GM12878 (cell line): ENCODE measurements at regions of chr20 and their contacts with region 1.

Region 1: DNA sequence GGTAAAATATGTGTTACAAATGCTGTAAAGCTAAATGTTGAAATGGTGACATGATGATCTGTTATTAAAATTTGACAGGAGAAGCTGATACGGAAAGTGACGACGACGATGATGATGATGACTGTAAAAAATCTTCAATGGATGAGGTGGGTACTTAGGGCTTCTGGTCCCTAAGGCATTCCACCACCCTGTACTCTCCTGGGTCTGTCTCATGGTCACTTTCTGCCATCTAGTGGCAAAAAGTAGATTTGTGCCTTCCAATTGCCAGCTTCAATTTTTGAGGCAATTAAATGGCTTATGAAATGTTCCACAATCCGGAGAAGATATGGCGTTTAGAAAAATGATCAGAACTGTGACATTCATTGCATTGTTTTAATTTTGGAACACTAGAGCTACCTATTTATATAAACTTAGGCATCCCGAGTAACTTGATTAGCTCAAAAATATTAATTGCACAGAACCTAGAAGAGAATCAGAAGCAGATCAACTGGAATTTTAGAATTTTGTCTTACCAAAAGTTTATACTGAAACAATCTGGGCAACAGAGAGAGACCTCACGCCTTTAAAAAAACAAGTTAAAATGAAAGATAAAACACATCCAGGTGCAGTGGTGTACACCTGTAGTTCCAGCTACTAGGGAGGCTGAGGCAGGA is 346.5 kb upstream of the PLCB4 start:
- DNase-seq: peak; percentile 30
- ATAC-seq: peak; percentile 93
- H3K4me3 ChIP-seq: no peak overlapping the region
- H3K27ac ChIP-seq: no peak overlapping the region
- H3K4me1 ChIP-seq: no peaks in the 10 kb centered on the region
- H3K27me3 ChIP-seq: peaks cover 1 to 2% of the 10 kb centered on the region in 2 experiments; a peak in 2 of 4 replicates
- CTCF ChIP-seq: peak; percentile 68 to 80 (median 68); a peak in 5 of 6 replicates
- EP300 ChIP-seq: no peak
- POLR2A ChIP-seq: no peak
- RAD21 ChIP-seq: peak; percentile 92

Region 2: GRCh38 chr20:7980332-7981046 is 741.9 kb before region 1 on chr20:
- CTCF ChIA-PET with region 1: interaction called, 12 read pairs
- POLR2A ChIA-PET with region 1: no interaction called
- RAD21 ChIA-PET with region 1: interaction called, 3 read pairs
- SMC1A ChIA-PET with region 1: interaction called, 6 read pairs
- in situ Hi-C with region 1: no loop called
- intact Hi-C with region 1: loop called (anchors 1 kb)
- DNase-seq: no peak
- ATAC-seq: peak; percentile 84
- H3K4me3 ChIP-seq: no peak overlapping the region
- H3K27ac ChIP-seq: no peak overlapping the region
- H3K4me1 ChIP-seq: no peaks in the 10 kb centered on the region
- H3K27me3 ChIP-seq: no peaks in the 10 kb centered on the region
- CTCF ChIP-seq: peak; percentile 46 to 49 (median 47); a peak in 4 of 6 replicates
- EP300 ChIP-seq: no peak
- POLR2A ChIP-seq: no peak
- RAD21 ChIP-seq: peak; percentile 41; the same call in 1 of the 2 replicates

Region 3: GRCh38 chr20:8131598-8132483 is 590.6 kb before region 1 on chr20 and contains the start of gene PLCB1:
- CTCF ChIA-PET with region 1: interaction called, 39 read pairs
- POLR2A ChIA-PET with region 1: no interaction called
- RAD21 ChIA-PET with region 1: interaction called, 9 read pairs
- SMC1A ChIA-PET with region 1: interaction called, 19 read pairs
- in situ Hi-C with region 1: loop called (anchors 5 kb)
- intact Hi-C with region 1: loop called (anchors 2 kb)
- DNase-seq: no peak
- ATAC-seq: peak; percentile 95
- H3K4me3 ChIP-seq: peak within 1 kb of the TSS; percentile 41; the same call in 1 of the 2 replicates
- H3K27ac ChIP-seq: no peak within 1 kb of the TSS
- H3K4me1 ChIP-seq: peaks cover 10% of the 10 kb centered on the region; the same call in 1 of the 2 replicates
- H3K27me3 ChIP-seq: peaks cover 5 to 10% of the 10 kb centered on the region in 2 experiments
- CTCF ChIP-seq: peak; percentile 79 to 95 (median 93); a peak in 5 of 6 replicates
- EP300 ChIP-seq: no peak
- POLR2A ChIP-seq: no peak
- RAD21 ChIP-seq: peak; percentile 89
- polyA plus RNA-seq, gene PLCB1: 0.05 TPM in 1 of 2 experiments, not detected in the other

Region 4: GRCh38 chr20:8313073-8313472 is 409.3 kb before region 1 on chr20:
- CTCF ChIA-PET with region 1: interaction called, 22 read pairs
- POLR2A ChIA-PET with region 1: no interaction called
- RAD21 ChIA-PET with region 1: no interaction called
- SMC1A ChIA-PET with region 1: interaction called, 5 read pairs
- in situ Hi-C with region 1: no loop called
- intact Hi-C with region 1: loop called (anchors 2 kb)
- DNase-seq: no peak
- ATAC-seq: no peak
- H3K4me3 ChIP-seq: no peak overlapping the region
- H3K27ac ChIP-seq: no peak overlapping the region
- H3K4me1 ChIP-seq: no peaks in the 10 kb centered on the region
- H3K27me3 ChIP-seq: no peaks in the 10 kb centered on the region
- CTCF ChIP-seq: no peak
- EP300 ChIP-seq: no peak
- POLR2A ChIP-seq: no peak
- RAD21 ChIP-seq: no peak

Region 5: GRCh38 chr20:8535403-8536261 is 186.8 kb before region 1 on chr20:
- CTCF ChIA-PET with region 1: interaction called, 6 read pairs
- POLR2A ChIA-PET with region 1: no interaction called
- RAD21 ChIA-PET with region 1: interaction called, 9 read pairs
- SMC1A ChIA-PET with region 1: interaction called, 3 read pairs
- in situ Hi-C with region 1: no loop called
- intact Hi-C with region 1: loop called (anchors 5 kb)
- DNase-seq: no peak
- ATAC-seq: peak; percentile 75
- H3K4me3 ChIP-seq: no peak overlapping the region
- H3K27ac ChIP-seq: no peak overlapping the region
- H3K4me1 ChIP-seq: no peaks in the 10 kb centered on the region
- H3K27me3 ChIP-seq: no peaks in the 10 kb centered on the region; a peak in 1 of 4 replicates
- CTCF ChIP-seq: peak; percentile 41 to 53 (median 44); a peak in 5 of 6 replicates
- EP300 ChIP-seq: no peak
- POLR2A ChIP-seq: no peak
- RAD21 ChIP-seq: peak; percentile 30; the same call in 1 of the 2 replicates

Region 6: DNA sequence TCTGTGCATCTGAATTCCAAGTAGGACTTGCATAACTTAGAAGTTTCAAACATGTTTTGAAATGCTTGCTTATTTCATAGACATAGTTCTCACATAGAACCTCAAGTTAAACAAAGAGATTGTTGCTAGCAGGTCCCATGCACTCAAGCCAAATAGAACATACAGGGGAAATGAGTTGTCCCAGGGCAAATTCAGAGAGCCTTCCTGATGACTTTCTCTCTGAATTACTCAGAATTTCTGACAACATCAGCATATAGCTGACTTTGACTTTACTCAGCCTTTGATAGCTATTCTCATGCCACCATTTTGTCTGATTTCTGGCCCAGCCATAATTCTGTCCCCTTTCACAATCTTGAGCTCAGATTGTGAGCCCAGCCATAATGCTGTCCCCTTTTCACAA is 13.3 kb after region 1 on chr20:
- CTCF ChIA-PET with region 1: interaction called, 21 read pairs
- POLR2A ChIA-PET with region 1: no interaction called
- RAD21 ChIA-PET with region 1: interaction called, 3 read pairs
- SMC1A ChIA-PET with region 1: interaction called, 9 read pairs
- in situ Hi-C with region 1: no loop called
- intact Hi-C with region 1: no loop called
- DNase-seq: no peak
- ATAC-seq: no peak
- H3K4me3 ChIP-seq: no peak overlapping the region
- H3K27ac ChIP-seq: no peak overlapping the region
- H3K4me1 ChIP-seq: no peaks in the 10 kb centered on the region
- H3K27me3 ChIP-seq: no peaks in the 10 kb centered on the region
- CTCF ChIP-seq: no peak
- EP300 ChIP-seq: no peak
- POLR2A ChIP-seq: no peak
- RAD21 ChIP-seq: no peak